ENCODE measurements at regions of chr11 and their contacts with region 1.

Region 1: GRCh38 chr11:14308114-14308896 is 50.7 kb downstream of the RRAS2 start:
- DNase-seq: no peak
- ATAC-seq: peak; percentile 74
- H3K4me3 Mint-ChIP-seq: no peak overlapping the region
- H3K27ac Mint-ChIP-seq: no peak overlapping the region
- H3K4me1 Mint-ChIP-seq: peaks cover 40% of the 10 kb centered on the region
- H3K27me3 Mint-ChIP-seq: no peaks in the 10 kb centered on the region

Region 2: DNA sequence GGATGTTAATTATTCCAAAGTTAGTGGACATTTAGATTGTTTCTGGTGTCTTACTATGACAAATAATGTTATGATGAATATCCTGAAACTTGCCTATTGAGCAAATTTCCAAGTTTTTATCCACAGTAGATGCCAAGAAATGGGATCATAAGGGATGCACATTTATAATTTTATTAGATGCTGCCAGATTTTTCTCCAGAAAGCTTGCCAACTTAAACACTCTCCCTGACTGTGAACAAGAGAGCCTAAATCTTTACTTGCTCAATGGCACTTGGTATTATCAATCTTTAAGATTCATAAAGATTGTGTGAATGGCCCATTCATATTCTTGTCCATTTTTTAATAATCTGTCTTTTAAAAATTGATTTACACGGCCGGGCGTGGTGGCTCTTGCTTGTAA is 263.4 kb before region 1 on chr11:
- CTCF ChIA-PET with region 1: no interaction called
- POLR2A ChIA-PET with region 1: no interaction called
- DNase-seq: no peak
- ATAC-seq: no peak
- H3K4me3 Mint-ChIP-seq: no peak overlapping the region
- H3K27ac Mint-ChIP-seq: no peak overlapping the region
- H3K4me1 Mint-ChIP-seq: no peaks in the 10 kb centered on the region
- H3K27me3 Mint-ChIP-seq: peaks cover 9% of the 10 kb centered on the region

Region 3: DNA sequence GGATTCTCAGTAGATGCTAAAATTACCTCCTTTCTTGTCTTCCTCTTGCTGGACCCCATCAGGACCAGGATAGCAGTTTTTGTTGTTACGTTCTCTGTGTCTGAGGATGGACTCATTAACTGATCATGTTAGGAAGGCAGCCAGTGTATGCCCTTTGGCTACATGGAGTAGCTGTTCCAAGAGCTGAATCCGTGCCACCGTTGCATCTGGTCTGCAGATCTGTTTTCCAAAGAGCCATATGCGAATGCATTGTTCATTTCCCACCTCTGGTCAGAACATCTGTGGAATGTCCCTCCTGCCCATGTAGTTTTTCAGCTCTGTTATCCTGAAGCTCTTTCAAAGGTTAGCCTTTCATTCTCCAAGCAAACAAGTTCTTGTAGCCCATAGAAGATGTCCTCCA is 157.4 kb before region 1 on chr11:
- CTCF ChIA-PET with region 1: no interaction called
- POLR2A ChIA-PET with region 1: no interaction called
- DNase-seq: no peak
- ATAC-seq: no peak
- H3K4me3 Mint-ChIP-seq: no peak overlapping the region
- H3K27ac Mint-ChIP-seq: no peak overlapping the region
- H3K4me1 Mint-ChIP-seq: no peaks in the 10 kb centered on the region
- H3K27me3 Mint-ChIP-seq: peaks cover 2% of the 10 kb centered on the region

Region 4: DNA sequence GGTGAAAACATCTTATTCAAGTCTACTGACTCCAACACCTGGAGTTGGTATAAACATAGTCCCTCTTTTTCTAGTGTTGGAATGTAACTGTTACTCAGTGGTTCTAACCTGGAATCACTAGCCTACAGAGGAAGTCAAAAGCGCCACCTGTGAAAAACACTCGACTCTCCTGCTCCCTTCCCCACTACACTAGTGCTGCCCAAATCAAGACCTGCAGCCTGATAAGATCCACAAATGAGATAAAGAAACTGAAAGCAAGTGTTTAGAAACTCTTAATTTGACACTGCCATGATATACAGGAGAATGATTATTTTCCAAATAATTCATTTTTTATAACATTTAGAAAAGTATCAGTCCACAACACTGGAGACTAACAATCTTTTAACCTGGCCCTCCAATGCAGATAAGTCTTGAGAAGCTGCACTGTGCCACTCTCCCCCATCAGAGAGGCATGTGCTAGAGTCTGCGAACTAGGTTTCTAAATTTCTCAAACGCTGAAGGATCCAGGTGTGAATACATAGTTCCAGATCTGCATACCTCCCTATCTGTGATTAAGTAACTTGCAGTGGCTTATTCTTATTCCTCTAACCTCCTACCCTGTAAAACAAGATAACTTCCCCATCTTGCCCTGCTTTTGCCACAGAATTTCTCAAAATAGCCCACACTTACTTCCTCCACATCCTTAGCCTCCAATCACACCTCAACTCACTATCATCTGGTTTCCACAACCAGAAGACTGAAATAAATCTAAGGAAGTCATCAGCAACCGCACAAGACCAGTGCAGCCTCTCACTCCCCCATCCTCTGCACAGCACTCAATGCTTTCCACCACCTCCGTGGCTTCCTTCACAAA is 37.4 kb before region 1 on chr11:
- CTCF ChIA-PET with region 1: no interaction called
- POLR2A ChIA-PET with region 1: no interaction called
- DNase-seq: peak; percentile 75
- ATAC-seq: peak; percentile 87
- H3K4me3 Mint-ChIP-seq: peak overlapping the region; percentile 51
- H3K27ac Mint-ChIP-seq: peak overlapping the region; percentile 85
- H3K4me1 Mint-ChIP-seq: peaks cover 43% of the 10 kb centered on the region
- H3K27me3 Mint-ChIP-seq: no peaks in the 10 kb centered on the region

Region 5: GRCh38 chr11:14320020-14320419 is 11.7 kb after region 1 on chr11:
- CTCF ChIA-PET with region 1: interaction called, 40 read pairs
- POLR2A ChIA-PET with region 1: interaction called, 4 read pairs
- DNase-seq: peak; percentile 88
- ATAC-seq: peak; percentile 93
- H3K4me3 Mint-ChIP-seq: peak overlapping the region; percentile 53
- H3K27ac Mint-ChIP-seq: peak overlapping the region; percentile 80
- H3K4me1 Mint-ChIP-seq: peaks cover 78% of the 10 kb centered on the region
- H3K27me3 Mint-ChIP-seq: no peaks in the 10 kb centered on the region

Region 6: DNA sequence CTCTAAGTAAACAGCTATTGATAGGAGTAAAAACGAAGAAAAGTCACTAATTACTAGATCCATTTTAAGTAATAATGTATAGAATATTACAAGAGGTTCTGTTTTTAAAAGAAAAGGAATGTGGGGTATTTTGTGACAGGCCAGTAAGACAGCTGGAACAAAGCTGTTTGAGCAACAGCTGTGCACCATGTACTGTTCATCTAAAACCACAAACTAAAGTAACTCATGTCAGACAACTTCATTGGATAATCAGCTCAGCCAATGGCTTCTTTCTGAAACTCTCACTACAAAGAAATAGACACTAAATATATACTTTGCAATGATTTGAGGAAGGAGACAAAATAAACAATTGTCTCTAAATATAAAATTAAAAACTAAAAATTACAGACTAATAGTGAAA is 34.6 kb after region 1 on chr11:
- CTCF ChIA-PET with region 1: interaction called, 13 read pairs
- POLR2A ChIA-PET with region 1: interaction called, 5 read pairs
- DNase-seq: no peak
- ATAC-seq: no peak
- H3K4me3 Mint-ChIP-seq: no peak overlapping the region
- H3K27ac Mint-ChIP-seq: no peak overlapping the region
- H3K4me1 Mint-ChIP-seq: peaks cover 42% of the 10 kb centered on the region
- H3K27me3 Mint-ChIP-seq: no peaks in the 10 kb centered on the region

Region 7: DNA sequence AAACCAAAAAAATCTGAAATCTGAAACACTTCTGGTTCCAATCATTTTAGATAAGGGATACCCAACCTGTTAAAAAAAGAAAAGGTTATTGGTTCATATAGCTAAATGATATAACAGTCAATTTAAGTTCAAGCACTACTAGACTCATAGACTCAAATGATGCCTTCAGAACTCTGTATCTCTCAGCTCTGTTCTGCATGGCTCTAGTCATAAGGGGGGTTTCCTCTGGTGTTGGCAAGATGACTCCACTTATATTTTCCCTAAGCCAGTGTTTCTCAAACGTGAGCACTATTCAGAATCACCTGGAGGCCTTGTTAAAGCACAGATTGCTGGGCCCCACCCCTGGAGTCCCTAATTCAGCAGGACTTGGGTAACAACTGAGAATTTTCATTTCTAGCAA is 62.2 kb after region 1 on chr11:
- CTCF ChIA-PET with region 1: interaction called, 12 read pairs
- POLR2A ChIA-PET with region 1: interaction called, 3 read pairs
- DNase-seq: no peak
- ATAC-seq: no peak
- H3K4me3 Mint-ChIP-seq: no peak overlapping the region
- H3K27ac Mint-ChIP-seq: no peak overlapping the region
- H3K4me1 Mint-ChIP-seq: peaks cover 70% of the 10 kb centered on the region
- H3K27me3 Mint-ChIP-seq: no peaks in the 10 kb centered on the region

Measured in activated CD8-positive, alpha-beta T cell treated with anti-CD3 and anti-CD28 coated beads, Interleukin-2, amount 10 ng/mL, durations not matched to agents 7 days and 5 days (primary cell).